Thyroid gland (tissue), 4 donors: ENCODE measurements at regions of chr2 and their contacts with region 1.

Region 1: DNA sequence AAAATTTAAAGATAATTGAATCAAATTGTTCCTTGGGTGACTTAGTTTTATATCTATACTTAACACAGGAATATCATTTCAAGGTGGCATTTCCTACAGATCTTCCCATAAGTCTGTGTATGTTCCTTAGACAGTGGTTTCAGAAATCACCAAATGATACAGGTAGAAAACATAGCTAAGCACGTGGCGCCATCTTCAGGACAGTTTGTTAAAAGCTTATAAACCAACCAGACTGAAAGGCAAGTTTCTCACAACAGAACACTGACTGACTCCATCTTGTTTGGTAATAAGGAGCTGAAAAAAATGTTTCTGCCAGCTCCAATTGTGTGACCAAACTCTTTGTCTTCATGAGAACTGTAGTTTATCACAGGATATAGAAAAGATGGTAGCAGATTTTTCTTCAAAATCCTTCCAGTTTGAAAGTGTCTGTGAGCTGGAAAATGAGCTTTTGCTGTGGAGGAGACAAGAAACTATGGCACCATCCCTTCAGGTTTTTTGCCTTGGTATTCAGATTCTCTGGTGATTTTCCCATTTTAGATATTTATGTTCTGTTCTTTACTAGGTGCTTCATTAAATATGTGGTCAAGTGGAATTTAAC is 34.8 kb upstream of the NEUROD1 start:
- DNase-seq: peak; percentile 55 to 72
- H3K4me3 ChIP-seq: no peak overlapping the region
- H3K27ac ChIP-seq: no peak overlapping the region
- H3K4me1 ChIP-seq: no peaks in the 10 kb centered on the region
- H3K27me3 ChIP-seq: no peaks in the 10 kb centered on the region
- CTCF ChIP-seq: peak; percentile 19 to 68 (median 40)
- POLR2A ChIP-seq: no peak

Region 2: GRCh38 chr2:180124273-180125139 is 1590.6 kb before region 1 on chr2:
- intact Hi-C with region 1: loop called (anchors 5 kb)
- DNase-seq: no peak
- H3K4me3 ChIP-seq: no peak overlapping the region
- H3K27ac ChIP-seq: no peak overlapping the region
- H3K4me1 ChIP-seq: no peaks in the 10 kb centered on the region
- H3K27me3 ChIP-seq: no peaks in the 10 kb centered on the region
- CTCF ChIP-seq: peak in 4 of 6 experiments; percentile 26 to 62 (median 60)
- POLR2A ChIP-seq: no peak

Region 3: GRCh38 chr2:181823405-181823804 is 108.3 kb after region 1 on chr2:
- intact Hi-C with region 1: no loop called
- DNase-seq: no peak
- H3K4me3 ChIP-seq: no peak overlapping the region
- H3K27ac ChIP-seq: no peak overlapping the region
- H3K4me1 ChIP-seq: no peaks in the 10 kb centered on the region
- H3K27me3 ChIP-seq: no peaks in the 10 kb centered on the region
- CTCF ChIP-seq: no peak
- POLR2A ChIP-seq: no peak

Region 4: GRCh38 chr2:182128791-182129707 is 413.9 kb after region 1 on chr2:
- intact Hi-C with region 1: no loop called
- DNase-seq: no peak
- H3K4me3 ChIP-seq: no peak overlapping the region
- H3K27ac ChIP-seq: peak overlapping the region in 1 of 3 donors; percentile 57
- H3K4me1 ChIP-seq: peaks cover 4 to 22% of the 10 kb centered on the region in 2 donors
- H3K27me3 ChIP-seq: no peaks in the 10 kb centered on the region
- CTCF ChIP-seq: no peak
- POLR2A ChIP-seq: no peak